Endothelial cell of umbilical vein (primary cell): ENCODE measurements at regions of chr1 and their contacts with region 1.

Region 1: GRCh38 chr1:70264839-70265238 is 43.7 kb downstream of the SRSF11 start:
- DNase-seq: peak; percentile 23
- H3K4me3 ChIP-seq: no peak overlapping the region
- H3K27ac ChIP-seq: no peak overlapping the region
- H3K4me1 ChIP-seq: peaks cover 10% of the 10 kb centered on the region
- H3K27me3 ChIP-seq: no peaks in the 10 kb centered on the region
- CTCF ChIP-seq: no peak
- POLR2A ChIP-seq: no peak

Region 2: DNA sequence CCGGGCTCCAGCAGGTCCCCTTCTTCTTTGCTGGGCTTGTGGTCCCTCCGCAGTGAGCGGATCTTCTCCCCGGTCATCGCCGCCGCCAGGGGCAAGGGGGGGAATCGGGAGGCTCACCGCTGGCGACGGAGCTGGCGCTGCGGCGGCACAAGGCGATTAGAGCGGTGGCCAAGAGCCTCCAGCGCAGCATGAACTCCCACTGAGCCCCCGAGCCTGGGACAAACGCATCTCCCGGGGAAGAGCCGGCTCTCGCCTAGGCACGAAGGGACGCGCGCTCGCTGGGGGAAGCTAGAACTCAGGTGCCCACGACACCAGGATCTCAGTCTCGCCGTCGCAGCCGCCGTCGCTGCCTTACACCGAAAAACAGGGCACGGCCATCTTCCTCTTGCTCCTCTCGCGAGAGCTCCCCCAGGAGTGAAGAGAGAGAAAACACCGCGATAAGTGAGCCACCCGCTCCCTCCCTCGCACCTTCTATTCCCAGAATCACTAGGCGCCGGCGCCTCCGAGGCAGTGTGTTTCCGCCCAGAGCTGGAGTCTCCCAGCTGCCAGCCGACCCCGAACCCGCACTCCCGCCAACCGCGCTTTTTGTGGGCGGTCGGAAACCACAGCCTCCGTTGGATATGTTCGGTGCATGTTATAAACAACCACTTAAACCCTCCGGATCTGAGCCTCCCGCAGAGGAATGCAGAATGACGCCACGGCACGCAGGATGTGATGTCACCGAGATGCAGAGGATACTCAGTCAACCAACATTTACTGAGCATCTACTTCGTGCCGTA is 89.7 kb after region 1 on chr1 and contains the start of gene ANKRD13C:
- CTCF ChIA-PET with region 1: no interaction called
- POLR2A ChIA-PET with region 1: no interaction called
- dilution Hi-C with region 1: no loop called
- intact Hi-C with region 1: loop called (anchors 5 kb)
- DNase-seq: peak; percentile 97
- H3K4me3 ChIP-seq: peak within 1 kb of the TSS; percentile 61 to 83 (median 83)
- H3K27ac ChIP-seq: peak within 1 kb of the TSS; percentile 83
- H3K4me1 ChIP-seq: peaks cover 11% of the 10 kb centered on the region
- H3K27me3 ChIP-seq: no peaks in the 10 kb centered on the region
- CTCF ChIP-seq: peak in 1 of 2 donors; percentile 16
- POLR2A ChIP-seq: peak; percentile 84
- total RNA-seq, gene ANKRD13C: 17.3 and 17.6 TPM in 2 replicates